Left cardiac atrium (tissue), 4 donors: ENCODE measurements at regions of chr10 and their contacts with region 1.

Region 1: GRCh38 chr10:104650072-104650471 is 9.0 kb downstream of the SORCS3 start:
- DNase-seq: no peak
- ATAC-seq: peak in 1 of 2 donors; percentile 53

Region 2: GRCh38 chr10:103592186-103593021 is 1057.7 kb before region 1 on chr10:
- intact Hi-C with region 1: no loop called
- DNase-seq: no peak
- ATAC-seq: peak in 1 of 2 donors; percentile 52

Region 3: GRCh38 chr10:104750301-104750700 is 100.2 kb after region 1 on chr10:
- intact Hi-C with region 1: loop called in 1 of 2 experiments (anchors 10 kb)
- DNase-seq: no peak
- ATAC-seq: no peak

Region 4: DNA sequence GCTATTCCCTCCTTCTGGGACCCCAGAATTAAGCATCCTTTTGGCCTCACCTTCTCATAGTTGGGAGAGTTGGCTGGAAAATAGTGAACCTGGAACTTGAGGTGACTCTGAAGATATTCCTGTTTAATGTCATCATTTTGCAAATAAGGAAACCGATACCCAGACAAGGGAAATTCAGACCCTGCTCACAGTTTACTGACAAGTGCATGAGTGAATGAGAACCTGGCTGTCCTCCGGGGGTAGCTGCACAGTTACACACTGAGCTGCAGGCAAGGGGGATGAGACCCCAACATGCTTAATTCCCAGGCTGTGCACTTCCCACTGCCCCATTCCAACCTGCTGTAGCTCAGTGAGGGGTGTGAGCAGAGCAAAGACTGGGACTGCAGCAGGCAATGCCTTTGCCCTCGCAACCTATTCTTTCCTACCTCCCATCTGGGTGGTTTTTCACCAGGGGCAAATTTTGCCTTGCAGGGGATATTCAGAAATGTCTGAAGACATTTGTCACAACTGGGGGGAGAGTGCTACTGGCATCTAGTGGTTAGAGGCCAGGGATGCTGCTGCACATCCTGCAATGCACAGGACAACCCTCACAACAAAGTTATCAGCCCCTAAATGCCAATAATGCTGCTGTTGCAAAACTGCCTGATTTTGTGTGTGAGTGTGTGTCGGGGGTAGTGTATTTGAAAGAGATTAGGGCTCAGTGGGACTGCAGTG is 127.2 kb after region 1 on chr10:
- intact Hi-C with region 1: loop called in 1 of 2 experiments (anchors 5 kb)
- DNase-seq: no peak
- ATAC-seq: no peak